Activated CD4-positive, alpha-beta memory T cell treated with anti-CD3 and anti-CD28 coated beads for 36 hours (primary cell): ENCODE measurements at regions of chr14 and their contacts with region 1.

Region 1: DNA sequence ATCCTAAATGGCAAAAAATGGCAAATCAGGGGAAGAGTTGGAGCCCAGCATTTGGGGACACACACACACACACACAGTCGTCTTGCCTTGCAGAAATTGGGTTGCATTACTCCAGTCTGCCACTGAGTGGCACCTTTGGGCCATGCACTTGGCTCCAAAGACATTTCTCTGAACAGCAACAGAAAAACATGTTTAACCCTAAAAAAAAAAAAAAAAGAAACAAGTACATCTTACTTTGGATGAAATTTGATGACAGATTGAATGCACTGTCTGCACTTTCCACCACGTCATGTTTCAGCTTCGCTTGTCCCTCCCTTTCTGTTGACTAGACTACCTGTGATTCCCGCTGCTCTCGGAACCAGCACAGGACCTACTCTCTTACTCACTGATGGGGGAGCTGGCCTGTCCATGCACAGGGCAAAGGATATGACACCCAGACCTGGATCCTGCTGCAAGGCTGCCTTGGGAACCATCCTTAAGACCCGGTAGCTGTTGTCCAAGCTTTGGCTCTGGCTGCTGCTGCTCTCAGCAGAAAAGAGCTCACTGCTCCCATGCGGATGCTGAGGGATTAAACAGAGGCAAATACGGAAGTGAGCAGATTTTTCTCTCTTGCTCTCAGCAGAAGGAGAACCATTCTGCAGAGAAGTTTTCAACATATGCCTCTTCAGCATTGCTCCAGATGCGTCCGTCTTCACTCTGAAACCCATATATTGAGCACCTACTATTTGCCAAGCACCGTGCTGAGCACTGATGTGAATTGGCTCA is 376.8 kb downstream of the DPF3 start:
- DNase-seq: peak; percentile 81
- H3K4me3 Mint-ChIP-seq: no peak overlapping the region
- H3K27ac Mint-ChIP-seq: no peak overlapping the region
- H3K4me1 Mint-ChIP-seq: peaks cover 54% of the 10 kb centered on the region
- H3K27me3 Mint-ChIP-seq: peaks cover 4% of the 10 kb centered on the region

Region 2: GRCh38 chr14:72380456-72380855 is 136.7 kb before region 1 on chr14:
- CTCF ChIA-PET with region 1: no interaction called
- POLR2A ChIA-PET with region 1: no interaction called
- intact Hi-C with region 1: no loop called
- DNase-seq: no peak
- H3K4me3 Mint-ChIP-seq: no peak overlapping the region
- H3K27ac Mint-ChIP-seq: no peak overlapping the region
- H3K4me1 Mint-ChIP-seq: no peaks in the 10 kb centered on the region
- H3K27me3 Mint-ChIP-seq: peaks cover 13% of the 10 kb centered on the region

Region 3: GRCh38 chr14:72476657-72477499 is 40.2 kb before region 1 on chr14:
- CTCF ChIA-PET with region 1: interaction called, 6 read pairs
- POLR2A ChIA-PET with region 1: interaction called, 7 read pairs
- intact Hi-C with region 1: loop called (anchors 1 kb)
- DNase-seq: peak; percentile 86
- H3K4me3 Mint-ChIP-seq: peak overlapping the region; percentile 54
- H3K27ac Mint-ChIP-seq: peak overlapping the region; percentile 84
- H3K4me1 Mint-ChIP-seq: peaks cover 32% of the 10 kb centered on the region
- H3K27me3 Mint-ChIP-seq: peaks cover 3% of the 10 kb centered on the region

Region 4: GRCh38 chr14:72535485-72535884 is 18.4 kb after region 1 on chr14:
- CTCF ChIA-PET with region 1: interaction called, 8 read pairs
- POLR2A ChIA-PET with region 1: no interaction called
- intact Hi-C with region 1: loop called (anchors 1 kb)
- DNase-seq: no peak
- H3K4me3 Mint-ChIP-seq: no peak overlapping the region
- H3K27ac Mint-ChIP-seq: no peak overlapping the region
- H3K4me1 Mint-ChIP-seq: peaks cover 43% of the 10 kb centered on the region
- H3K27me3 Mint-ChIP-seq: no peaks in the 10 kb centered on the region

Region 5: DNA sequence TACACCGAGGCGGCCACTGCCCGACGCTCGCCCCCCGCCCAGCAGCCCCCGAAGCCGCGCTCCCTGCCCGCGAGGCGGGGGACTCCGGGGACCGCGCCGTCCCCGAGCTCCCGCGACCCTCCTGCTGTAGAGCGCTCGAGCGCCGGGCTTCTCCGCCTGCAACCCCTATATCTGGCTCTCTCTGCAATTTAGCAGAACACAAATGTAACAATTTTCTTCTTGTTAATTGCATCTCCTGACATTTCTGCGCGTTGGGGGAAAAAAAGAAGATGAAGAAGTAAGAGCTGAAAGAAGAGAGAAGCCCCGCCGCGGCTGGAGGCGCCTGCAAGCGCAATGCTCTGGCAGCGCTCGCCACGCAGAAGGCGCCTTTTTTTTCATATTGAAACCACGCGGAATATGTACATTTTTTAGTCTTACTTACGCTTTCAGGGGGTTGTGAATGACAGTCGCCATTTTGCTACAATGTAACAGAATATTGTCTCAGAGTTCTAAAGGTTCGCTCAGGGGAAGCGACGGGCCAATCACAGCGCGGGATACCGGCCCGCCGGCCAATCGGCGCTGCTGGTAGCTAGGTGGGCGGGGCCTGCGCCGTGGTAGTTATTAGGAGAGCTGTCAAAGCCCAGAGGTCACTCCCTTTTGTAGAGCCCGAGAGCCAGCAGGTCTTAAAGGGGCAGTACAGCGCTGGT is 376.7 kb after region 1 on chr14 and contains the start of gene DPF3:
- CTCF ChIA-PET with region 1: interaction called, 30 read pairs
- POLR2A ChIA-PET with region 1: interaction called, 5 read pairs
- intact Hi-C with region 1: no loop called
- DNase-seq: peak; percentile 94
- H3K4me3 Mint-ChIP-seq: peak within 1 kb of the TSS; percentile 88
- H3K27ac Mint-ChIP-seq: peak within 1 kb of the TSS; percentile 40
- H3K4me1 Mint-ChIP-seq: peaks cover 20% of the 10 kb centered on the region
- H3K27me3 Mint-ChIP-seq: peaks cover 43% of the 10 kb centered on the region
- total RNA-seq, gene DPF3: 0.24 to 0.39 TPM

Region 6: DNA sequence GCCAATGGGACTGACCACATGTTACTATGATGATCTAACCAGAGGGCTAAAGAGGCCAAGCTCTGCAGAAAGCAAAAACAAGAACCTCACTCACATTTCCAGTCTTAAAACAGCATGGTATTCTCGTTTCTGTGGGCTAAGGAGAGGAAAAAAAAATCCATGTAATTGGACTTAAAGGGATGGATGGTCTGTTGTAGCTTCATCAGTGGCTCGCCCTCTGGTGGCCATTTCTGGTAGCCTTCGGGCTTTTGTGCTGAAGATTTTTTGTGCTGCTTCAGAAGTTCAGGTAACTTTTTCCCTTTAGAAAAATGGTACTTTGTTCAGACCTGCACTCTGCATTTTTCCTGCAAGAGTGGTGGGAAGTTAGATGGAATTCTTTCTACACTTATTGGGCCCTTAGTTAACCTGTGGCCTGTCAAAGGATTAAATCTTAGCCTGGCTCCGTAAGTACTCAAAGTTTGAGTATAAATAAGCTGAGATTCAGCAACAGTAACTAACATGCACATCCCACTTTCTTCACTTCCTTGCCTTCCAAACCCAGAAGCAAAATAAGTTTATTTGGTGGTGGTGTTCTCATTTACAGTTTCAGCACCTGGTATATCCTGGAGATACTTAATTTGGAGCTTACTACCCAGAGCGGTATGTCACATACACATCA is 431.5 kb after region 1 on chr14:
- CTCF ChIA-PET with region 1: interaction called, 65 read pairs
- POLR2A ChIA-PET with region 1: interaction called, 4 read pairs
- intact Hi-C with region 1: loop called (anchors 1 kb)
- DNase-seq: peak; percentile 75
- H3K4me3 Mint-ChIP-seq: no peak overlapping the region
- H3K27ac Mint-ChIP-seq: no peak overlapping the region
- H3K4me1 Mint-ChIP-seq: no peaks in the 10 kb centered on the region
- H3K27me3 Mint-ChIP-seq: no peaks in the 10 kb centered on the region

Region 7: GRCh38 chr14:73472185-73473114 is 955.3 kb after region 1 on chr14:
- CTCF ChIA-PET with region 1: interaction called, 3 read pairs
- POLR2A ChIA-PET with region 1: no interaction called
- intact Hi-C with region 1: loop called (anchors 5 kb)
- DNase-seq: no peak
- H3K4me3 Mint-ChIP-seq: no peak overlapping the region
- H3K27ac Mint-ChIP-seq: no peak overlapping the region
- H3K4me1 Mint-ChIP-seq: peaks cover 17% of the 10 kb centered on the region
- H3K27me3 Mint-ChIP-seq: no peaks in the 10 kb centered on the region